ENCODE measurements at regions of chr2 and their contacts with region 1.

Region 1: GRCh38 chr2:200713003-200713703 is 98.6 kb upstream of the BZW1 start:
- DNase-seq: peak; percentile 84
- ATAC-seq: peak; percentile 99
- H3K4me3 Mint-ChIP-seq: peak overlapping the region; percentile 82
- H3K27ac Mint-ChIP-seq: peak overlapping the region; percentile 99
- H3K4me1 Mint-ChIP-seq: peaks cover 18% of the 10 kb centered on the region
- H3K27me3 Mint-ChIP-seq: peaks cover 1% of the 10 kb centered on the region

Region 2: DNA sequence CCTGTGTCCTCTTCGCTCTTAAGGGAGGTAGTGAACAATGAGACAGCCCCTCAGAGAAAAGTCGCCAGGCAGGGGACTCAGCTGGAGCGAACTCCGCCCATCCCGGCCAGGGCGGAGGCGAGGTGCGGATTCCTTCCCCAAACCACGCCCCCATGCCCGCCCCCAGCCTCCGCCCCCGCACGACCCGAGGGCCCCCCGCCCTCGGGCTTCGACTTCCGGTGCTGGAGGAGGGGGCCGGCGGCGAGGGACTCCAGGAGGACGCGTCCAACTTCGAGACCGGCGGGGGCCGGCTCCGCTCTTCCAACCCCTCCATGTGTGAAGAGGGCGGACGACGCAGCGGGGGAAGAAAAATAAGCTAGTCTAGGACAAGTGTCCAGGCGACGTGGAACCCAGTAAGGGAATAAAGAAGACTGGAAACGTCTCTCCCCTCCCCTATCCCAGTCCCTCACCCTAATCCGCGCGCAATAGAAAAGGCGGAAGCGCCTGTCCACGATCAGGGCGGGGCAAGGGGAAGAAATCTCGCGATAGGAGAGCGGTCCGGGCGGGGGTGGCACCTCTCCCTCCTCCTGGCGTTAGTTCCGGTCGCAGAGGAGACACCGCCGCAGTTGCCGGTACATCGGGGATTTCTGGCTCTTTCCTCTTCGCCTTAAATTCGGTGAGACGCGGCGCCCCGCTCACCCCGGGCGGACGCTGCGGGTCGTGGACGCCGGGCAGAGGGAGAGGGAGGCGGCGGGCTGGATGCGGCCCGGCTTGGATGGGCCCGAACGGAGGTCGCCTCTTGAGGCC is 98.4 kb after region 1 on chr2 and contains the start of gene BZW1:
- POLR2A ChIA-PET with region 1: interaction called, 12 read pairs
- DNase-seq: peak; percentile 95
- ATAC-seq: peak; percentile 81
- H3K4me3 Mint-ChIP-seq: peak within 1 kb of the TSS; percentile 95
- H3K27ac Mint-ChIP-seq: peak within 1 kb of the TSS; percentile 96
- H3K4me1 Mint-ChIP-seq: peaks cover 36% of the 10 kb centered on the region
- H3K27me3 Mint-ChIP-seq: no peaks in the 10 kb centered on the region
- total RNA-seq, gene BZW1: 197 to 199 TPM